ENCODE measurements at regions of chr9 and their contacts with region 1.

Region 1: DNA sequence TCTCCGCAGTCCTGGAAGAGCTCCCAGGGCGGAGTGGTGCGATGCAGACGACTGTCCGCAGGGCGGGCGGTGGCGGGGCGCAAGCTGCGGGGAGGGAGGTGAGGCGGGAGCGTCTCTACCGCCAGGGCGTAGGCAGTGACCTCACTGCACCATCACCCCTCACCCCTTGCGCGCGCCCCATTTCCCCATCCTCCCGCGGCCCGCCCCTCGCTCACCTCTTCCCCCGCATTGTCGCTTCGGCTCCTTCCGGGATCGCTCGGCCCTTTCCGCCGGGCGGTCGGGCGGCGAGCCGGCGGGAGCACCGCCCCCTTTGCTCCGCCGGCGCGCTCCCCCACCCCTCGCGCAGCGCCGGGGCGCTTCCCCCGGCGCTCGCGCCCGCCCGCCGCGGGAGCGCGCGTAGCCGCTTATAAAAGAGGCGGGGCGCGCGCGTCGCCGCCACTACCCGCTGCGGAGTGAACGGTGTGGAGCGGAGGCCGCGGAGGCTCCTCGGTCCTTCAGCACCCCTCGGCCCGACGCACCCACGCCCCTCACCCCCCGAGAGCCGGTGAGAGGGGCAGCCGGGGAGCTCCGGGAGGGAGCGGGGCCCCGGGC is at the start of gene SPTAN1:
- DNase-seq: peak; percentile 92 to 98 (median 96)
- ATAC-seq: peak; percentile 94
- H3K4me3 ChIP-seq: peak within 1 kb of the TSS; percentile 84
- H3K4me3 Mint-ChIP-seq: peak within 1 kb of the TSS in 7 of 10 donors; percentile 85 to 94 (median 92)
- H3K27ac ChIP-seq: peak within 1 kb of the TSS; percentile 94
- H3K27ac Mint-ChIP-seq: peak within 1 kb of the TSS; percentile 92 to 98 (median 97)
- H3K4me1 ChIP-seq: peaks cover 44 to 45% of the 10 kb centered on the region in 2 donors
- H3K4me1 Mint-ChIP-seq: peaks cover 15 to 38% (median 34%) of the 10 kb centered on the region in 7 donors
- H3K27me3 ChIP-seq: no peaks in the 10 kb centered on the region
- H3K27me3 Mint-ChIP-seq: no peaks in the 10 kb centered on the region
- total RNA-seq, gene SPTAN1: 336 to 433 (median 375) TPM

Region 2: DNA sequence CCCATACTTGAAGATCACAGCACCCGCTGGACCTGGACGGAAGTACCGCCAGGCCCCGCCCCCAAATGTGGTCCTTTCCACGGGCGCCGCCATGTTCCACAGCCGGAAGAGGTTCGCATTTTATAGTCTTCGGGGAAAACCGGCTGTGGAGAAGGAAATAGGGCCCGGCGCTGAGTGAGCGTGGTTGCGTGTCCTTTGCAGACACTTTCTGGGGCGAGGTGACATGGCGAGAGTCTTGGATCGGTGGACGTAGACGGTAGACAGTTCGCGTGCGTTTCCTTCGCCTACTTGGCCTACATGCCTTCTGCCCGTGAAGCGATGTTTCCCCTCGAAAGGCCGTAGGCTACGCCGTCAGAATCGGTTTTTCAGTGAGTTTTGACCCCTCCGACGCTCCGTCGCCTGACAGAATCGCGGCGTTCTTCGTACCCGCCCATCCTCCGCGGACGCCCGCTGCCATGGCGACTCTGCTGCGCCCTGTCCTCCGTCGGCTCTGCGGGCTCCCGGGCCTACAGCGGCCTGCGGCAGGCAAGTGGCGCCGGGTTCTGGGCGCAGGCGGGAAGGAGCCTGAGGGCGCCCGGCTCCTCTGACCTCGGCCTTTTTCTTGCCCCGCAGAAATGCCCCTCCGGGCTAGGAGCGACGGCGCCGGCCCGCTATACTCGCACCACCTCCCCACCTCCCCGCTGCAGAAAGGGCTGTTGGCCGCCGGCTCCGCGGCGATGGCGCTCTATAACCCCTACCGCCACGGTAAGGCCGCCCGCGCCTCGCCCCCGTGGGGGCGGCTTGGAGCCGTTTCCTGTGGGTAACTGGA is 229.6 kb before region 1 on chr9 and contains the starts of genes COQ4 and TRUB2:
- CTCF ChIA-PET with region 1: no interaction called
- POLR2A ChIA-PET with region 1: interaction called, 3 read pairs
- intact Hi-C with region 1: loop called (anchors 1 to 5 kb)
- DNase-seq: peak; percentile 80 to 95 (median 94)
- ATAC-seq: peak; percentile 95
- H3K4me3 ChIP-seq: peak within 1 kb of the TSS; percentile 98
- H3K4me3 Mint-ChIP-seq: peak within 1 kb of the TSS; percentile 82 to 99 (median 96)
- H3K27ac ChIP-seq: peak within 1 kb of the TSS; percentile 85
- H3K27ac Mint-ChIP-seq: peak within 1 kb of the TSS; percentile 95 to 99 (median 98)
- H3K4me1 ChIP-seq: peaks cover 10 to 13% of the 10 kb centered on the region in 2 donors
- H3K4me1 Mint-ChIP-seq: peaks cover 4 to 45% (median 29%) of the 10 kb centered on the region in 7 donors
- H3K27me3 ChIP-seq: no peaks in the 10 kb centered on the region
- H3K27me3 Mint-ChIP-seq: peaks cover 0 to 2% (median 0%) of the 10 kb centered on the region in 5 donors
- total RNA-seq, gene COQ4: 32.9 to 47.2 (median 42.4) TPM
- total RNA-seq, gene TRUB2: 11.5 to 27.2 (median 21.6) TPM

Region 3: GRCh38 chr9:128504485-128505413 is 47.5 kb before region 1 on chr9 and contains the start of gene GLE1:
- CTCF ChIA-PET with region 1: no interaction called
- POLR2A ChIA-PET with region 1: interaction called, 38 read pairs
- intact Hi-C with region 1: loop called (anchors 1 to 2 kb)
- DNase-seq: peak; percentile 93 to 99 (median 97)
- ATAC-seq: peak; percentile 98
- H3K4me3 ChIP-seq: peak within 1 kb of the TSS; percentile 97
- H3K4me3 Mint-ChIP-seq: peak within 1 kb of the TSS; percentile 92 to 100 (median 99)
- H3K27ac ChIP-seq: peak within 1 kb of the TSS; percentile 92
- H3K27ac Mint-ChIP-seq: peak within 1 kb of the TSS; percentile 82 to 100 (median 99)
- H3K4me1 ChIP-seq: peaks cover 8 to 11% of the 10 kb centered on the region in 2 donors
- H3K4me1 Mint-ChIP-seq: peaks cover 0 to 38% (median 34%) of the 10 kb centered on the region in 7 donors
- H3K27me3 ChIP-seq: no peaks in the 10 kb centered on the region
- H3K27me3 Mint-ChIP-seq: no peaks in the 10 kb centered on the region
- total RNA-seq, gene GLE1: 14.2 to 46.5 (median 30.5) TPM

Region 4: DNA sequence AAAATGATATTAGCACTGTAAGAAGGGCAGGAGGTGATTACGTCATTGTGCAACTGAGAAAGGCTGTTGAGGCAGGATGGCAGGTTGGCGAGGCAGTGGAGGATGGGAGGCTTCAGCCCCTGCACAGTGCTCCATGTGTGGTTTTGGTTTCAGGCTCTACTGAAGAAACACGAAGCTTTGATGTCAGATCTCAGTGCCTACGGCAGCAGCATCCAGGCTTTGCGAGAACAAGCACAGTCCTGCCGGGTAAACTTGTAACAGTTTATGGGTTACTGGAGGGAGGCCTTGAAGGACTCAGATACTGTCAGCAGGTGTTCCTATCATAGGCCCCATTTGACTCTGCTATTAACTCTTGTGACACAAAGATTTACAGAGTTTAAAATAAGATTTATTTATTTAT is 35.2 kb after region 1 on chr9:
- CTCF ChIA-PET with region 1: no interaction called
- POLR2A ChIA-PET with region 1: interaction called, 10 read pairs
- intact Hi-C with region 1: loop called (anchors 2 to 5 kb)
- DNase-seq: peak in 8 of 9 donors; percentile 43 to 80 (median 72)
- ATAC-seq: peak; percentile 96
- H3K4me3 ChIP-seq: no peak overlapping the region
- H3K4me3 Mint-ChIP-seq: peak overlapping the region in 7 of 10 donors; percentile 4 to 55 (median 26)
- H3K27ac ChIP-seq: peak overlapping the region; percentile 44
- H3K27ac Mint-ChIP-seq: peak overlapping the region; percentile 77 to 93 (median 86)
- H3K4me1 ChIP-seq: peaks cover 0 to 4% of the 10 kb centered on the region in 2 donors
- H3K4me1 Mint-ChIP-seq: peaks cover 4 to 15% (median 9%) of the 10 kb centered on the region in 7 donors
- H3K27me3 ChIP-seq: no peaks in the 10 kb centered on the region
- H3K27me3 Mint-ChIP-seq: no peaks in the 10 kb centered on the region

Region 5: DNA sequence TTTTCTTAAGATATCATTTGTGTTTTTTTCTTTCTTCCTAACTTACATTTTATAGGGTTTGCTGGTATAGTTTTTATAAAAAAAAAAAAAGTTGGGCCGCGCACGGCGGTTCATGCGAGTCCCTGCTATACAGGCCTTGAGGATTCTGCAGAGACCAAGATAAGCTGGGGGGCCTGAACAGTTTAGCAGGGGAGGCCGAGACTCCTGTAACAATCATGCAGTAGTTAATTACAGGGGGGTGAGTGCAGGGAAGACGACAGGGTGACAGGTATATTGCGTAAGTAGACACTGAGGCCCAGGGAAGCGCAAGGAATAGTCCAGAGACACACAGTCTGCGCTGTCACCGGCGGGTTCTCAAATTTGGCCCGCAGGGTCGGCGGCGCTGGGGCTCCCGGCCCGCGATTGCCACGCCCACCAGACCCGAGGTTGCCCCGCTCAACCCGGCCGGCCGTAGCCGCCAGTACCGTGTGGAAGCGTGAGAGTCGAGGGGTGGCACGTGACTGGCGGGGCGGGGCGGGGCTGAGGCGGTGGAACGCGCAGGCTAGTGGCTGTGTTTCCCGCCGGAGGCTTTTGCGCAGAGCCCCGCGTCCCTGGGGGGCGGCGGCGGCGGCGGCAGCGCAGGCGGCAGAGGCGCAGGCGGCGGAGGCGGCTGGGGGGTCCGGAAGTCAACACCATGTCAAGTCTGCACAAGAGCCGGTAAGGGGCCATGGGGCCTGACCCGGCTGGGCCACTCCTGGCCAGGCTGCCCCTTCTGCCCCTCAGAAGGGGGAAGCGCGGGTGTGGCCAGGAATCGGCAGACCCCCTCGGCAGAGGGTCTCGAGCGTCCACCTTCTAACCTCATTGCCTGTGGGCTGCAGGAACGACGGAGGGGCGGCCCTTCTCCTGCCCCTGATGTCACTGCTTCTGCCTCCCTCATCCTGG is 234.7 kb after region 1 on chr9 and contains the start of gene TBC1D13:
- CTCF ChIA-PET with region 1: no interaction called
- POLR2A ChIA-PET with region 1: no interaction called
- intact Hi-C with region 1: loop called in 1 of 2 experiments (anchors 2 kb)
- DNase-seq: peak; percentile 88 to 93 (median 92)
- ATAC-seq: peak; percentile 99
- H3K4me3 ChIP-seq: peak within 1 kb of the TSS; percentile 90
- H3K4me3 Mint-ChIP-seq: peak within 1 kb of the TSS; percentile 80 to 98 (median 92)
- H3K27ac ChIP-seq: peak within 1 kb of the TSS; percentile 82
- H3K27ac Mint-ChIP-seq: peak within 1 kb of the TSS; percentile 87 to 98 (median 95)
- H3K4me1 ChIP-seq: peaks cover 13% of the 10 kb centered on the region in 2 donors
- H3K4me1 Mint-ChIP-seq: peaks cover 6 to 29% (median 23%) of the 10 kb centered on the region in 7 donors
- H3K27me3 ChIP-seq: no peaks in the 10 kb centered on the region
- H3K27me3 Mint-ChIP-seq: no peaks in the 10 kb centered on the region
- total RNA-seq, gene TBC1D13: 21.0 to 35.2 (median 24.9) TPM

Region 6: GRCh38 chr9:128992995-128993394 is 440.7 kb after region 1 on chr9:
- CTCF ChIA-PET with region 1: no interaction called
- POLR2A ChIA-PET with region 1: no interaction called
- intact Hi-C with region 1: no loop called
- DNase-seq: no peak
- ATAC-seq: no peak
- H3K4me3 ChIP-seq: no peak overlapping the region
- H3K4me3 Mint-ChIP-seq: no peak overlapping the region
- H3K27ac ChIP-seq: no peak overlapping the region
- H3K27ac Mint-ChIP-seq: peak overlapping the region in 3 of 9 donors; percentile 4 to 28 (median 6)
- H3K4me1 ChIP-seq: peaks cover 0 to 6% of the 10 kb centered on the region in 2 donors
- H3K4me1 Mint-ChIP-seq: peaks cover 16 to 27% (median 21%) of the 10 kb centered on the region in 7 donors
- H3K27me3 ChIP-seq: no peaks in the 10 kb centered on the region
- H3K27me3 Mint-ChIP-seq: no peaks in the 10 kb centered on the region

Region 7: GRCh38 chr9:129110740-129111527 is 558.7 kb after region 1 on chr9 and contains the starts of genes CRAT and PTPA:
- CTCF ChIA-PET with region 1: no interaction called
- POLR2A ChIA-PET with region 1: no interaction called
- intact Hi-C with region 1: loop called in 1 of 2 experiments (anchors 5 kb)
- DNase-seq: peak; percentile 85 to 96 (median 89)
- ATAC-seq: peak; percentile 93
- H3K4me3 ChIP-seq: peak within 1 kb of the TSS; percentile 82
- H3K4me3 Mint-ChIP-seq: peak within 1 kb of the TSS; percentile 88 to 97 (median 92)
- H3K27ac ChIP-seq: peak within 1 kb of the TSS; percentile 87
- H3K27ac Mint-ChIP-seq: peak within 1 kb of the TSS; percentile 83 to 97 (median 94)
- H3K4me1 ChIP-seq: peaks cover 10% of the 10 kb centered on the region in 2 donors
- H3K4me1 Mint-ChIP-seq: peaks cover 26 to 45% (median 29%) of the 10 kb centered on the region in 7 donors
- H3K27me3 ChIP-seq: no peaks in the 10 kb centered on the region
- H3K27me3 Mint-ChIP-seq: no peaks in the 10 kb centered on the region
- total RNA-seq, gene CRAT: 7.2 to 15.6 (median 11.4) TPM
- total RNA-seq, gene PTPA: 45.0 to 110 (median 52.3) TPM